ENCODE measurements at regions of chr3 and their contacts with region 1.

Region 1: DNA sequence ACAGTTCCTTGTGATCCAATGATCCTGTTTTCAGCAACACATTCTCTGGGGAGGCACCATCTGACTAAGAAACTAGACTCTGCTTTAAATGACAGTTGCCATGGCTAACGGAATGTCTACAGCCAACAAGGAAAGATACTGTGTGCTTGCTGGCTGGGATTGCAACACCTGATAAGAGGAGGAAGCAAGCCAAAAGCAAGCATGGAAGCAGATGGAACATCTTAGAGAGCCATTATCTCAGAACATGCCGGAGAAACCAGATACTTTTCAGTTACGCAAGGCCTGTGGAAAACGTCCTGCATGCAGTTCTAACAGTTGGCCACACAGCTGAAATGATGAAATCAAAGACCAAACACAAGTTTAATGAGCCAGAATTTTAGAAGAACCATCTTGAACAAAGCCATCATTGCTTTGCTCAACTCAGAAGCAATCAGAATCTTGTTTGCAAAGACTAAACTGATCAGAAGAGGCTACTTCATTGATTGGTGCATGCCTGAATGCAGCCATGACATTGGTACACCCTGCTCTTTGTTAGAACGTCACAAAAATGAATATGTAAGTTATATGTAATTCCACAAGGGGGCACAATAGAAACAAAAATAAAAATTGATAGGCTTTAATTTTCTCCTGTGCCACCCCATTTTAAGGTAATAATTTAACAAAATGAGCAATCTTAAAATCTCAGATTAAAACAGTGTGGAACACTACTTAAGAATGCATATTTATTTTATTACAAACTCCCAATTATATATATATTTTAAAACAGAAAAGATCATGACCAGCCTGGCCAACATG is 50.8 kb downstream of the GXYLT2 start:
- DNase-seq: peak; percentile 39
- H3K4me3 Mint-ChIP-seq: no peak overlapping the region
- H3K27ac Mint-ChIP-seq: no peak overlapping the region
- H3K4me1 Mint-ChIP-seq: no peaks in the 10 kb centered on the region
- H3K27me3 Mint-ChIP-seq: peaks cover 15% of the 10 kb centered on the region

Region 2: DNA sequence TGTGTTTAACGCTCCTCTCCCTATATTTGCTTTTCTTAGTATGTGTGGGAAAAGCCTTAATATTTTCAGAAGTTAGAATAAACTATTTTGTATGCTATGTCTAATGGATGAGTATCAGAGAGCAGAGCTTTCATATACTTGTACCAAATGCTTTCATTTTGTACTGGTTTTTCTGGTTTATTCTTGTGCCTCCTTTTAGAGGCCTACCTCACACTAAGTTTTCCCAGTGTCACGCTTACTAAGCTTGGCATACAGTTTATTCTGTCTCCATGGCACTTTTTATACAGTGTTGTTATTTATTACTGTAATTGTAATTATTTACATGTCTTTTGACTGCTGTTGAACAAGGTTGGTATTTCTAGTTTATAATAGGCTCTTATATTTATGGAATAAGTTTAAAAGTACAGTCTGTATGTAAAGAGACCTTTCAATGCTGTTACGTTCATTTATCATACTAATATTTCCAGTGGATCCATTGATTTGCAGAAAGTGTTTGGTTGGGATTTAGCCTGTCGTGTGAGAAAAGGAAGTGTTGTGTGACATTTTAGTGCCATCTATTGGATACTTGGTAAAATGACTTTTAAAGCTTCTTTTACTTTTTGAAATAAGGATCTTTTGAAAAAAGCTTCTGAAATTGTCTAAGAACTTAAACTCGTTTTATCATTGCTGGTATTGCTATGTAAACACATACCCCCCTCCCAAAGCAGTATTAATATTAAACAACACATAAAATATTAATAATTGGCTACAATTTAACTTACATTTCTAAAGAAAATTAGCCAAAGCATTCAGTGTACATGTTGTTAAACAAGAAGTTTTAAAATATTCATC is 117.6 kb after region 1 on chr3:
- CTCF ChIA-PET with region 1: interaction called, 53 read pairs
- DNase-seq: no peak
- H3K4me3 Mint-ChIP-seq: no peak overlapping the region
- H3K27ac Mint-ChIP-seq: no peak overlapping the region
- H3K4me1 Mint-ChIP-seq: peaks cover 3% of the 10 kb centered on the region
- H3K27me3 Mint-ChIP-seq: no peaks in the 10 kb centered on the region

Region 3: GRCh38 chr3:73086071-73086494 is 147.4 kb after region 1 on chr3:
- CTCF ChIA-PET with region 1: interaction called, 15 read pairs
- DNase-seq: peak; percentile 55
- H3K4me3 Mint-ChIP-seq: no peak overlapping the region
- H3K27ac Mint-ChIP-seq: no peak overlapping the region
- H3K4me1 Mint-ChIP-seq: peaks cover 7% of the 10 kb centered on the region
- H3K27me3 Mint-ChIP-seq: peaks cover 4% of the 10 kb centered on the region

Measured in activated naive CD4-positive, alpha-beta T cell treated with anti-CD3 and anti-CD28 coated beads, Interleukin-2, amount 10 ng/mL, durations not matched to agents 7 days and 5 days (primary cell).